GM23248 (cell line): ENCODE measurements at regions of chr9 and their contacts with region 1.

Region 1: GRCh38 chr9:100884518-100884917 is 144.0 kb upstream of the PLPPR1 start:
- DNase-seq: no peak
- H3K4me3 ChIP-seq: no peak overlapping the region
- H3K27ac ChIP-seq: no peak overlapping the region
- H3K4me1 ChIP-seq: no peaks in the 10 kb centered on the region
- H3K27me3 ChIP-seq: no peaks in the 10 kb centered on the region

Region 2: GRCh38 chr9:100774962-100775361 is 109.6 kb before region 1 on chr9:
- in situ Hi-C with region 1: loop called (anchors 25 kb)
- DNase-seq: no peak
- H3K4me3 ChIP-seq: no peak overlapping the region
- H3K27ac ChIP-seq: no peak overlapping the region
- H3K4me1 ChIP-seq: no peaks in the 10 kb centered on the region
- H3K27me3 ChIP-seq: no peaks in the 10 kb centered on the region